ENCODE measurements at regions of chr17 and their contacts with region 1.

Region 1: GRCh38 chr17:10050597-10051101 is 145.6 kb upstream of the RCVRN start:
- DNase-seq: no peak
- H3K4me3 ChIP-seq: no peak overlapping the region
- CTCF ChIP-seq: no peak

Region 2: GRCh38 chr17:10018461-10018891 is 32.2 kb before region 1 on chr17:
- in situ Hi-C with region 1: loop called (anchors 5 kb)
- DNase-seq: no peak
- H3K4me3 ChIP-seq: no peak overlapping the region
- CTCF ChIP-seq: no peak

Region 3: DNA sequence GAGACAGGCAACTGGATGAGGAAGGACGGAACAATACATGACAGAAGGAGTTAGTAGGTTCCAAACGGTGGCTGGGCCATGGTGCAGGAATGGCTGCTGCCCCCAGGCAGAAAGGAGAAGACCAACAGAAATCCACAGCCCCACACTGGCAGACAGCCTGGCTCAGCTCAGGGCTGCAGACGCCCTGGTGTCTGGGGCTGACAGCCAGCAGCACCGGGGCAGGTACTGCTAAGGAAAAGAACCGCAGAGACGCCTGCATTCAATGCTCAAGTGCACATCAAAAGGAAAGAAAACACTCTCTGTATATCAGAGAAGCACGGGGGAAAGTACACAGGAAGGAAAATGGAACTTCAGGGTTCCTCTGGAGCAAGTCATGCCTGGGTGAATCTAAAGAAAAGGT is 94.3 kb after region 1 on chr17:
- in situ Hi-C with region 1: no loop called
- DNase-seq: no peak
- H3K4me3 ChIP-seq: no peak overlapping the region
- CTCF ChIP-seq: no peak